ENCODE measurements at regions of chr9 and their contacts with region 1.

Region 1: DNA sequence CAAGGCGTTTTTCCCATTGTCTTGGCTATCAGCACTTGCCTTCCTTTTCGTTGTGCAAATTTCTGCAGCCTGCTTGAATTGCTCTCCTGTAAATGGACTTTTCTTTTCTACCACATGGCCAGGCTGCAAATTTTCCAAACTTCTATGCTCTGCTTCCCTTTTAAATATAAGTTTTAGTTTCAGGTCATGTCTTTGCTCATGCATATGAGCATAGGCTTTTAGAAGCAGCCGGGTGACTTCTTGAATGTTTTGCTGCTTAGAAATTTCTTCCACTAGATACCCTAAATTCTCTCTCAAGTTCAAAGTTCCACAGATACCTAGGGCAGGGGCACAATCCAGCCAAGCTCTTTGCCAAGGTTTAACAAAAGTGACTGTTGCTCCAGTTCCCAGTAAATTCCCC is 22.4 kb upstream of the PTPDC1 start:
- DNase-seq: no peak
- ATAC-seq: no peak
- H3K4me3 ChIP-seq: no peak overlapping the region
- H3K27ac ChIP-seq: no peak overlapping the region
- H3K4me1 ChIP-seq: peaks cover 0 to 7% of the 10 kb centered on the region in 2 donors
- H3K27me3 ChIP-seq: no peaks in the 10 kb centered on the region
- CTCF ChIP-seq: no peak

Region 2: DNA sequence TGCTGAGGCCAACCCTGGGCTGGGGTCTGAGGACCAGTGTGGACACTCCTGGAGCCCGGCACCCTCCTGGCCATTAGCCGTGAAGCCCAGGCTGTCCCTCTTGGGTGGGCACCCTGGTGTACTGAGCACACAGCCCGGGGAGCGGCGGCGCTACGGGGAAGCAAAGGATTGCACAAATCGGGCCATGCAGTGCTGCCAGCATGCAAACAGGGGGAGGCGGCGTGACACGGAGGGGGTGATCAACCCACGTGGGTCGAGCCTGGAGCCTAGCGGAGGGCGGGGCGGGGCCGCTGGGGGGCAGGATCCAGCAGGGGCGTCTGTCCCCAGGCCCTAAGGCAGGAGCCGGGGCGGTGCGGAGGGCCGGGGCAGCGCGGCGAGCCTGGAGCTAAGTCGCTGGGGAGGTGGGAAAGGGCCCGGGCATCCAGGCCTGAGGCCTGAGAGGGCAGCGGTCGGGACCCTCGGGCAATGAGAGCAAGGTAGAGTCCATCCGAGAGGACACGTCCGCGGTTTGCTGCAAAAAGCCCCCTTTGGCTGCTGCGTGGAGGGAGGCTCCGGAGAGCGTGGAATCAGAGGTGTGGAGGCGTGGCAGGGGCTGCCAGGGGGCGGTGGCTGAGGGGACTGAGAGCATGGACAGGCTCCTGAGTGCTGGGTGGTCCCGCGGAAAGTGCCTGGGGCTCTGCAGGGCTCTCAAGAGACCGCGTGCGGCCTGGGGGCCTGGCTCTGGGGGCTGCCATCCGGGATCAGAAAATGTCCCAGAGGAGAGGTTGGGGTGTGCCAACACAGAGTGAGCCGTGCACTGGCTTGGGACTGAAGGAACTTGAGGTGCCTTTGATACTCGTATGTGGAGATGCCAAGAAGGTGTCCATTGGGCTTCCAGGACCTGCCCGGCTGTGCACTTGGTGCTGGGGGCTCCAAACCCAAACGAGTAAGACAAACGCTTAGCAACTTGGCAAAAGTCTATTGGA is 200.9 kb before region 1 on chr9:
- intact Hi-C with region 1: no loop called
- DNase-seq: peak in 2 of 4 donors; percentile 18 to 44
- ATAC-seq: peak; percentile 31
- H3K4me3 ChIP-seq: no peak overlapping the region
- H3K27ac ChIP-seq: no peak overlapping the region
- H3K4me1 ChIP-seq: peaks cover 0 to 5% of the 10 kb centered on the region in 2 donors
- H3K27me3 ChIP-seq: peaks cover 12 to 89% of the 10 kb centered on the region in 2 donors
- CTCF ChIP-seq: no peak

Region 3: GRCh38 chr9:94213511-94214124 is 151.8 kb after region 1 on chr9:
- intact Hi-C with region 1: loop called in 1 of 2 experiments (anchors 5 kb)
- DNase-seq: peak; percentile 70 to 86 (median 77)
- ATAC-seq: peak; percentile 99
- H3K4me3 ChIP-seq: no peak overlapping the region
- H3K27ac ChIP-seq: no peak overlapping the region
- H3K4me1 ChIP-seq: peaks cover 0 to 8% of the 10 kb centered on the region in 2 donors
- H3K27me3 ChIP-seq: peaks cover 0 to 5% of the 10 kb centered on the region in 2 donors
- CTCF ChIP-seq: peak; percentile 71 to 91